IMR-90 (cell line): ENCODE measurements at regions of chr12 and their contacts with region 1.

Region 1: DNA sequence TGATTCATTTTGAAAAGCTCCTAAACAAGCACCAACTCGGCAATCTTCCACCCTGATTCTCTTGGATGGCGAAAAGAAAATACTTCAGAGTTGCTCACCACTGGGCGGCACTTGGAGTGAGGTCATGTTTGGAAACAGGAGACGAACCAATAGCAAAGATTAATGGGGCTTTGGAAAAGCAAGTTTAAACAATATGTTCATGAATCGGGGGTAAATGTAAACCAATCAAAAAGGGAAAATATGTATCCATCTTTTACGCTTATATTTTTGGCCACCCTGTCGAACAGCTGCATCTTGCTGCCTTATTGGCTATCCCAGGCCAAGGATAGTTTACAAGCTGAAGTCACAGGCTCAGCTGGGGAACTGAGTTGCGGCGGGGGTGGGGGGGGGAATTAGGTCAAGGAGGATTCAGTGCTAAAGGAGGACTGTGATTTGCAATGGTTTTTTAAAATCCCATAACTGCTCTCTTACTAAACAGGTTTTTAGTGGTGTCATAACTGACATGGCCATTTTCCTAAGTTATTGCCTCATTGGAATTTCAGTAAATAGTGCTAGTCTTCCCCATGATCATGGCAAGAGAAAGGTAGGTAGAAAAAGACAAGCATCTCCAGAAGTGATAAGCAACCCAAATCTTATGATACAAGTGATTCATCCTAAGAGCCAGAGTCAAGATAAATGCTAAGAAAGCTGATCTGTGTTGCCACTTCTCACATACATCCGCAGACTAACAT is 210.6 kb downstream of the PHLDA1 start:
- DNase-seq: peak; percentile 97
- ATAC-seq: peak; percentile 71
- H3K4me3 ChIP-seq: no peak overlapping the region; the same call in 1 of the 2 replicates
- H3K27ac ChIP-seq: peak overlapping the region; percentile 40
- H3K4me1 ChIP-seq: peaks cover 33% of the 10 kb centered on the region
- H3K27me3 ChIP-seq: no peaks in the 10 kb centered on the region
- CTCF ChIP-seq: peak; percentile 18; the same call in 1 of the 2 replicates
- POLR2A ChIP-seq: no peak
- RAD21 ChIP-seq: 0 out of 2 replicates have a peak, but pooled peaks have one; percentile 20

Region 2: DNA sequence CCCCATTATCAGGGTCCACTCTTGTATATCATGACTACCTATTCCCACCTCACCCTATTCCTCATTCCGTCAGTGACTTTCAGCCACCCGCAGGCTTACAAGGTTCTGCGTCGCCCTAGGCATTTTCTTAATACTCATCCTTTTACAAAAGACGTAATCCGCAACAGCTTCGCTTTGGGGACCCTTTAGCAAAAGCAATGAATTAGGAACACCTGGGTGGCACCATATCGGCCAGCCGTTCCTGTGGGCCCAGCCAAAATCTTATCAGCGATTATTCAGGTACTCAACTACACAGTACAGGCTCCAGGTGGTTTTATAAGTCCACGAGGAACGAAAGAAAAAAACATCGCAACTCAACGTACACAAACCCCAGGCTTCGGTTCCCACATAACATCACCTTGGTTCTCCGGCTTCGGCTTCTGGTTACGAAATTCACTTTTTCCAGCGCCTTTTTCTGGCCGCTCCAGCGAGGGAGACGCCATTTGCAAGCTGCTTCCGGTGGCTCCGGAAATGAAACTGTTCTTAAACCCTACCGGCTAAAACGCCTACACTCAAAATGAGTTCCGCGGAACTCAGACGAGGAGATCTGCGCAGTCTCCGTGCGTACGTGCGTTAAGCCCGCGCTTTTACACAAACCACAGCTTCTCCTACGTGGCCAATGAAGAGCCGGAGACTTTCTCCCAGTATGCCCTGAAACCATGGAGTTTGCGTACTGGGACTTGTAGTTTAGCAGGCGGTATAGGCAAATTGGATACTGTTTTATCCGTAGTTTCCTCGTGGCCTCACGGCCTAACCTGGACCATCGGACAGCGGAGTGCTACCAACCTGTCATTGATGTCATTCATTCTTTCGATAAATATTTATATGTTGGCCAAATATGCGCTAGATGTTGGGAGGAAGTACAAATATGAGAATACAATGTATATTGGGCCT is 309.6 kb before region 1 on chr12 and contains the start of gene KRR1:
- CTCF ChIA-PET with region 1: no interaction called
- POLR2A ChIA-PET with region 1: no interaction called
- dilution Hi-C with region 1: no loop called
- in situ Hi-C with region 1: no loop called
- intact Hi-C with region 1: loop called (anchors 5 kb)
- DNase-seq: peak; percentile 99
- ATAC-seq: peak; percentile 97
- H3K4me3 ChIP-seq: peak within 1 kb of the TSS; percentile 60
- H3K27ac ChIP-seq: peak within 1 kb of the TSS; percentile 66
- H3K4me1 ChIP-seq: 0 out of 2 replicates have a peak, but pooled peaks cover 1% of the 10 kb centered on the region
- H3K27me3 ChIP-seq: no peaks in the 10 kb centered on the region
- CTCF ChIP-seq: no peak
- POLR2A ChIP-seq: peak; percentile 76
- RAD21 ChIP-seq: no peak; the same call in none of the 2 replicates
- total RNA-seq, gene KRR1: 31.4 and 40.0 TPM in 2 replicates

Region 3: DNA sequence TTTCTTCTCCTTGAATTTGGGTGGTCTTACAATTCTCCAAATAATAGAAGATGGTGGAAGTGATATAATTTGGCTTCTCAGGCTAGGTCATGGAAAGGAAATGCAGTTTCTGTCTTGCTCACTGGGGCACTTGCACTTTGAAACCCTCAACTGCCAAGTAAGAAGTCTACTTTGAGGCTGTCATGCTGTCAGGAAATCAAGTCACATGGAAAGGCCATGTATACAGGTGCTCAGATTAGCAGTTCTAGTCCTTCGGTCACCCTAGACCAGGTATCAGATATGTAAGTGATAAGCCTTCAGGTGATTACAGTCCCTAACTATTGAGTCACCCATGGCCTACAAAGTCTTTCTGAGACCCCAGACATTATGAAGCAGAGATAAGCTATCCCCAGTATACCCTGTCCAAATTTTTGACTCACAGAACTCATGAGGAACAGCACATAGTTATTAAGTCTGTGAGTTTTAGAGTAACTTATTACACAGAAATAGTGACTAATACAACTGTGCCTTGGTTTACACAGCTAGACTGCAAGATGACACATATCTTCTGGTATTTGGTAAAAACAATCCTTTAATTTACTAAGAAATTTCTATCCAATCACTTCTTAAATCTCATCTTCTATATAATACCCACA is 553.5 kb after region 1 on chr12:
- CTCF ChIA-PET with region 1: no interaction called
- POLR2A ChIA-PET with region 1: no interaction called
- dilution Hi-C with region 1: no loop called
- in situ Hi-C with region 1: no loop called
- intact Hi-C with region 1: no loop called
- DNase-seq: peak; percentile 79
- ATAC-seq: peak; percentile 93
- H3K4me3 ChIP-seq: no peak overlapping the region
- H3K27ac ChIP-seq: no peak overlapping the region
- H3K4me1 ChIP-seq: peaks cover 3% of the 10 kb centered on the region; the same call in 1 of the 2 replicates
- H3K27me3 ChIP-seq: no peaks in the 10 kb centered on the region
- CTCF ChIP-seq: no peak
- POLR2A ChIP-seq: no peak
- RAD21 ChIP-seq: no peak